ENCODE measurements at regions of chr5 and their contacts with region 1.

Region 1: DNA sequence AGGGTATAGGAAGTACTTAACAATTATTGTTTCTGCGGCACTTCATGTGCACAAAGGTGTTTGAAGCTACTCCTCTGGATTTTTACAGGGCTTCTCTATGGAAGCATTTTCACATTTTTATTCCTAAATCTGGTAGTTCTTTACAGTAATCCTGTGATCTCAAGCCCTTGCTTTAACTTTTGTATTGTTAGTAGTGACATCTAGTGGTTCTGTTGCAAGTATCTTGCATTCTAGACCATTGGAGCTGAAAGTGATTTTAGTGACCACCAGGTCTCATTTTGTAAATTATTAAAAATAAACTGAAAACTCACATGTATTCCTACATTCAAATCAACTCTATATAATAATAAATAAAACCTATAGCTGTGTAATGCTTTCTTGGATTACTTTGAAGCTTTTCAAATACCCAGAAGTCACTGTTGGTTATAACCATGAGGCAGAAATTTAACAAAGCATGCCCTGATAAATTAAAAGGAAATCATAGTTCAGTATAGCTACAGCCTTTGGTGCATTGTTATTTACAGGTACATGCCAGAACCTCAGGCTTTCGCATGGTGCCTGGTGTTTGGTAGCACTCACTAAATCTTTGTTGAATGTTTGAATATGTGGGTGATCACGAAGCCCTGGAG is 18.9 kb downstream of the RPS23 start:
- DNase-seq: peak; percentile 14 to 35
- ATAC-seq: peak; percentile 83 to 86
- H3K4me3 ChIP-seq: no peak overlapping the region
- H3K27ac ChIP-seq: no peak overlapping the region
- H3K4me1 ChIP-seq: no peaks in the 10 kb centered on the region
- CTCF ChIP-seq: peak; percentile 68
- EP300 ChIP-seq: no peak
- POLR2A ChIP-seq: no peak
- RAD21 ChIP-seq: peak; percentile 48 to 55

Region 2: GRCh38 chr5:81420039-81420667 is 839.1 kb before region 1 on chr5:
- CTCF ChIA-PET with region 1: interaction called, 11 read pairs
- POLR2A ChIA-PET with region 1: no interaction called
- DNase-seq: peak; percentile 47 to 69
- ATAC-seq: peak; percentile 93 to 94
- H3K4me3 ChIP-seq: no peak overlapping the region
- H3K27ac ChIP-seq: peak overlapping the region; percentile 70 to 80
- H3K4me1 ChIP-seq: peaks cover 31% of the 10 kb centered on the region
- CTCF ChIP-seq: no peak
- EP300 ChIP-seq: no peak
- POLR2A ChIP-seq: no peak
- RAD21 ChIP-seq: no peak

Region 3: DNA sequence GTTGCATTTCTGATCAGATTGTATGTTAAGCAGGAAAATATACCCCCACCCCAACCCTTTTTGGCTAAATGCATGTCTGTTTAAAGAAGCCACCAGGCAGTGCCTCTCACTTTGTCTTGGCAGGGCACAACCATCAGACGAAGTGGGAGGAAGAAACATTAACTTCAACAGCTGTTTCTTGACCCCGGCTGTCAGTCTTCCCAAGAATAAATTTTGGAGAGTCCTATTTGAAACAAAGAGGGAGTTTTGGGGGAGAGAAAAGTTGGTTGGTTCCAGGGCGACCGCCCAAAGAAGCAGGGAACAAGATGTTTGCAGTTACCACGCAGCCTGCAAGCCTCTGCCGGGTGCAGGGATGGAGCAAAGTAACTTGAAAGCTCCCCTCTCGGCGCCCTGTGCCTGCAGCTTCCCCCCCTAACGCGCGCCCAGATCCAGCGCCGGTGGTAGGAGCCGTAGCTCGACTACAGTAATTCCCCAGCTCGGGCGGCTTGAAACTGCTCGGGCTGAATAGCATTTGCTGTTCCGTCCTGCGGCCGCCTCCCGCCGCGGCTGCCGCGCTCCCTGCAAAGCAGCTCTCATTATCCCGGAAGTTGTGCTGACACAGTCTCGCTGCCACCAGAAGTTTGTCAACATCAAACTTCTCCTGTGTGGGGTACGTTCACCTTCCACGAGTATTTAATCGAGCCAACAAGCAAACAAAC is 407.7 kb before region 1 on chr5:
- CTCF ChIA-PET with region 1: no interaction called
- POLR2A ChIA-PET with region 1: no interaction called
- DNase-seq: peak; percentile 89 to 92
- ATAC-seq: peak; percentile 93 to 94
- H3K4me3 ChIP-seq: peak overlapping the region; percentile 44
- H3K27ac ChIP-seq: peak overlapping the region; percentile 92 to 95
- H3K4me1 ChIP-seq: peaks cover 49% of the 10 kb centered on the region
- CTCF ChIP-seq: no peak
- EP300 ChIP-seq: peak; percentile 15 to 58; a peak in 1 of 5 replicates
- POLR2A ChIP-seq: no peak
- RAD21 ChIP-seq: peak; percentile 49 to 76

Region 4: GRCh38 chr5:82244854-82245635 is 14.2 kb before region 1 on chr5:
- CTCF ChIA-PET with region 1: interaction called, 11 read pairs
- POLR2A ChIA-PET with region 1: no interaction called
- DNase-seq: no peak
- ATAC-seq: no peak
- H3K4me3 ChIP-seq: no peak overlapping the region
- H3K27ac ChIP-seq: no peak overlapping the region
- H3K4me1 ChIP-seq: no peaks in the 10 kb centered on the region
- CTCF ChIP-seq: no peak
- EP300 ChIP-seq: no peak
- POLR2A ChIP-seq: no peak
- RAD21 ChIP-seq: peak in 1 of 2 experiments; percentile 11; a peak in 1 of 5 replicates

Region 5: DNA sequence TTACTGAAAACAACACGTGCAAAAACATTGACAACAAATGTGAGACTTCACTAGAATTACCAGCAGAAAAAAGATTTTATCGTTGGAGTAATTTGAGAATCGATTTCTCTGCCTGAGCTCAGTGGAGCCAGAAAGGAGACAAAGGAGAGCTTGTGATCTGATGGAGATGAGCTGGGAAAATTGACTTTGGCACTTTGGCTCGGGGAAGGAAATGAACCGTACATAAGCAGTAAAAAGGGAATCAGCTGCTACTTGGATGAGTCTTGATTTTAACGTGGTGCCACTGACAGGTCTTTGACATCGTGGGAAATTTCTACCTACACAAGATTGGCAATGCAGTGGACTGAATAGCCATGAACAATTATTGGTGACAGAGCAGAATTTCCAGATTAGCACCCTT is 263.6 kb after region 1 on chr5:
- CTCF ChIA-PET with region 1: no interaction called
- POLR2A ChIA-PET with region 1: no interaction called
- DNase-seq: no peak
- ATAC-seq: no peak
- H3K4me3 ChIP-seq: no peak overlapping the region
- H3K27ac ChIP-seq: no peak overlapping the region
- H3K4me1 ChIP-seq: no peaks in the 10 kb centered on the region
- CTCF ChIP-seq: no peak
- EP300 ChIP-seq: no peak
- POLR2A ChIP-seq: no peak
- RAD21 ChIP-seq: no peak

Region 6: GRCh38 chr5:82605441-82605973 is 346.2 kb after region 1 on chr5:
- CTCF ChIA-PET with region 1: no interaction called
- POLR2A ChIA-PET with region 1: no interaction called
- DNase-seq: no peak
- ATAC-seq: no peak; a peak in 1 of 6 replicates
- H3K4me3 ChIP-seq: no peak overlapping the region
- H3K27ac ChIP-seq: no peak overlapping the region
- H3K4me1 ChIP-seq: no peaks in the 10 kb centered on the region
- CTCF ChIP-seq: no peak
- EP300 ChIP-seq: no peak
- POLR2A ChIP-seq: no peak
- RAD21 ChIP-seq: no peak

Measured in A549 (cell line).